Activated CD4-positive, alpha-beta T cell treated with anti-CD3 and anti-CD28 coated beads for 36 hours (primary cell): ENCODE measurements at regions of chr17 and their contacts with region 1.

Region 1: GRCh38 chr17:50816771-50817751 is 18.3 kb upstream of the WFIKKN2 start:
- DNase-seq: peak; percentile 73
- ATAC-seq: peak; percentile 71
- H3K4me3 Mint-ChIP-seq: no peak overlapping the region
- H3K27ac Mint-ChIP-seq: no peak overlapping the region
- H3K4me1 Mint-ChIP-seq: no peaks in the 10 kb centered on the region
- H3K27me3 Mint-ChIP-seq: peaks cover 10% of the 10 kb centered on the region

Region 2: GRCh38 chr17:50841949-50842354 is 24.9 kb after region 1 on chr17:
- CTCF ChIA-PET with region 1: interaction called, 4 read pairs
- POLR2A ChIA-PET with region 1: no interaction called
- intact Hi-C with region 1: loop called in 1 of 2 experiments (anchors 1 kb)
- DNase-seq: peak; percentile 77
- ATAC-seq: peak; percentile 85
- H3K4me3 Mint-ChIP-seq: no peak overlapping the region
- H3K27ac Mint-ChIP-seq: no peak overlapping the region
- H3K4me1 Mint-ChIP-seq: no peaks in the 10 kb centered on the region
- H3K27me3 Mint-ChIP-seq: no peaks in the 10 kb centered on the region

Region 3: GRCh38 chr17:50956750-50957523 is 139.9 kb after region 1 on chr17:
- CTCF ChIA-PET with region 1: interaction called, 8 read pairs
- POLR2A ChIA-PET with region 1: no interaction called
- intact Hi-C with region 1: loop called (anchors 1 kb)
- DNase-seq: peak; percentile 80
- ATAC-seq: peak; percentile 98
- H3K4me3 Mint-ChIP-seq: no peak overlapping the region
- H3K27ac Mint-ChIP-seq: no peak overlapping the region
- H3K4me1 Mint-ChIP-seq: peaks cover 2% of the 10 kb centered on the region
- H3K27me3 Mint-ChIP-seq: no peaks in the 10 kb centered on the region